ENCODE measurements at regions of chr7 and their contacts with region 1.

Region 1: DNA sequence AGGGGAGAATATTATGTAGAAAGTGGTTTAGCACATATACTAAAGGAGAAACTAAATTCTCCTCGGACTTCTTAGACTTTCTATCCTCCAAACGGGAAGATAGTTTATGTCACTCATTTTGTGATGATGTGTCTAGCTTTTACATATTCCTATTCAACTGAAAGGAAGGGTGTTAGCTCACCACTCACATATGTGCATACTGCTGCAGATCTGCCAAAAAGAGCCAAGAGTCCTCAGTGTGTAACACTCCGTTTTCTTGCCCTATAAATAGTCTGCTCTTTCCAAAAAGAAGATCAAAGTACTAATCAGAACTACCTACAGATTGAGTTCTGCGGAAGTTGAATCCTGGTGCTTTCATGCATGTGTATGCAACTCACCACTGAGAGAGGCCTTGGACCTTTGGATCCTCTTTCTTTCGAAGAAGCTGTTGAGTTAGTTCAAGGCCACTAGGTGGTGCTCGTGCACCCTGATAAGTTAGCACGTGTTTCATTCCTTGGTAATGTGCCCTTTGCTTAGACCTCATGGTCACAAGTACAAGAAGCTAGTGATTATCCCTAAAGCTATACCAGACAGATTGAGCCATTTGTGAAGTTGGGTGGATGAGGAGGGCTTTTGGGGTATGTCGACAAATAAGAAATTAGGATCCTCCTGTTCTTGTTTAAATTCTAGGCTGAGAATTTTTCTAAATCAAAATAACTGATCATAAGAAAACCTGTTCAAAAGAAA is 14.1 kb downstream of the YAE1 start:
- DNase-seq: peak; percentile 94
- H3K4me3 ChIP-seq: no peak overlapping the region
- H3K27ac ChIP-seq: peak overlapping the region; percentile 1
- H3K4me1 ChIP-seq: no peaks in the 10 kb centered on the region
- H3K27me3 ChIP-seq: no peaks in the 10 kb centered on the region
- CTCF ChIP-seq: peak; percentile 74
- POLR2A ChIP-seq: no peak

Region 2: DNA sequence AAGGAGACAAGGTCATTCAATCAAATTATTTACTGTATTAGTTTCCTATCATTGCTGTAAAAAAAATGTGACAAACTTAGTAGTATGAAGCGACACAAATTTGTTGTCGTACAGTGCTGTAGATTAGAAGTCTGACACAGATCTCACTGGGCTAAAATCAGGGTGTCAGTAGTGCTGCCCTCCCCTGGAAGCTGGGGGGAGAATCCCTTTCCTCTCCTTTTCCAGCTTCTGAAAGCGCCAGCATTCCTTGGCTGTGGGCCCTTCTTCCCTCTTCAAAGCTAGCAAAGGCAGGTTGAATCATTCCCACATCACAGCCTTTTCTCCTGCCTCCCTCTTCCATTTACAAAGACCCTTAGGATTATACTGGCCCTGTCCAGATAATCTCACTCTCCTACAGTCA is 699.3 kb before region 1 on chr7:
- CTCF ChIA-PET with region 1: no interaction called
- POLR2A ChIA-PET with region 1: no interaction called
- dilution Hi-C with region 1: no loop called
- intact Hi-C with region 1: no loop called
- DNase-seq: no peak
- H3K4me3 ChIP-seq: no peak overlapping the region
- H3K27ac ChIP-seq: no peak overlapping the region
- H3K4me1 ChIP-seq: peaks cover 7% of the 10 kb centered on the region
- H3K27me3 ChIP-seq: no peaks in the 10 kb centered on the region
- CTCF ChIP-seq: no peak
- POLR2A ChIP-seq: no peak

Region 3: DNA sequence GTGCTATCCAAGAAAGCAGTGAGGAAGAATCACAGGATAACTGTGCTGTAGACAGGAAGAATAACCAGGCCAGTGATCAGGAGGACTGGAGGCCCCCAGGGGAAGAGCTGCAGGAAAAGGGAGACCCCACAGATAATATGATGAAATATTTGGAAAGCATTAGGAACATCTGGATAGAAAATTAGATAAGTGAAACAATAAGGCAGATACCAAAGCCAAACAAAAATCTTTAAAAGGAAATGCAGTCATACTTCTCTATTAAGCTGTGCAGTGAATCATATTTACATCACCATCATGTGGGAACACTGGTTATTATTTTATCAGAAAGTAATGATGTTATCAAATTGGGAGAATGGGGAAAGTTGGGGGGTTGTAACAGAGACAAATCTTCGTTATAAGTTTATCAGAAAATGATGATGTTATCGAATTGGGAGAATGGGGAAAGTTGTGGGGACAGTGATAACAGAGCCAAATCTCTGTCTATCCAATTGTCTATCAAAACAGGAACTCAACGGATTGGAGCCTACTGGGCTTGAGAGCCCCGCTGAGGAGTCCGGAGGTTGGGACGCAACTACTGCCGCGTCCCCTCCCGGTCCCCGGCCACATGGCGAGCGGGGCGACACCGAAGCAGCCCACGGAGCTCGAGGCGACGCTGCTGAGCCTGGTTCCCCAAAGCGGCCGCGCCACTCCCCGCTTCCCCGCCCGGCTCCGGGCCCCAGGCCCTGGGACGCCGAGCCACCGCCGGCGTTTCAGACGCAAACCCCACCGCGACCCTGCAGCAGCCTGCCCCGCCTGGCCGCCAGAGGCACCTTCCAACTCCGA is 29.0 kb after region 1 on chr7:
- CTCF ChIA-PET with region 1: interaction called, 134 read pairs
- POLR2A ChIA-PET with region 1: interaction called, 10 read pairs
- dilution Hi-C with region 1: no loop called
- intact Hi-C with region 1: loop called (anchors 2 kb)
- DNase-seq: peak; percentile 89
- H3K4me3 ChIP-seq: peak overlapping the region in 2 of 3 experiments; percentile 16 to 25
- H3K27ac ChIP-seq: peak overlapping the region; percentile 99
- H3K4me1 ChIP-seq: peaks cover 75% of the 10 kb centered on the region
- H3K27me3 ChIP-seq: no peaks in the 10 kb centered on the region
- CTCF ChIP-seq: peak; percentile 30 to 42
- POLR2A ChIP-seq: peak; percentile 14

Region 4: GRCh38 chr7:39642896-39643295 is 62.6 kb after region 1 on chr7:
- CTCF ChIA-PET with region 1: interaction called, 23 read pairs
- POLR2A ChIA-PET with region 1: interaction called, 3 read pairs
- dilution Hi-C with region 1: no loop called
- intact Hi-C with region 1: no loop called
- DNase-seq: peak; percentile 71
- H3K4me3 ChIP-seq: no peak overlapping the region
- H3K27ac ChIP-seq: no peak overlapping the region
- H3K4me1 ChIP-seq: peaks cover 33% of the 10 kb centered on the region
- H3K27me3 ChIP-seq: no peaks in the 10 kb centered on the region
- CTCF ChIP-seq: no peak
- POLR2A ChIP-seq: no peak

Region 5: GRCh38 chr7:39667341-39667923 is 87.1 kb after region 1 on chr7:
- CTCF ChIA-PET with region 1: interaction called, 26 read pairs
- POLR2A ChIA-PET with region 1: no interaction called
- dilution Hi-C with region 1: no loop called
- intact Hi-C with region 1: no loop called
- DNase-seq: no peak
- H3K4me3 ChIP-seq: no peak overlapping the region
- H3K27ac ChIP-seq: no peak overlapping the region
- H3K4me1 ChIP-seq: peaks cover 17% of the 10 kb centered on the region
- H3K27me3 ChIP-seq: no peaks in the 10 kb centered on the region
- CTCF ChIP-seq: no peak
- POLR2A ChIP-seq: no peak

Region 6: DNA sequence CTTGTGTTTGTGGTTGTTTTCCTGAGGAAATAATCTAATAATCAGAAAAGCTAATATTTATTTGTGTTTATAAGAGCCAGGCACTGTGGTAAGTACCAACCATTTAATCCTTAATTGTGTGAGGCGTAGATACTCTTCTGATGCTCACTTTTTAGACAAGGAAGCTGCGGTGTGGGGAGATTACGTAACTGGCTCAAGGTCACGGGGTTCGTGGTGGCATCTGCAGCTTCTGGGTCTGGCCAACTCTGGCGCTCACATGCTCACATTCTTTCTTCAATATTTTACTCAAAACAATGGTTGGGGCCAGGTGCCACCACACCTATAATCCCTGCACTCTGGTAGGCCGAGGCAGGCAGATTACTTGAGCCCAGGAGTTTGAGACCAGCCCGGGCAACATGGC is 120.6 kb after region 1 on chr7:
- CTCF ChIA-PET with region 1: interaction called, 29 read pairs
- POLR2A ChIA-PET with region 1: no interaction called
- dilution Hi-C with region 1: no loop called
- intact Hi-C with region 1: no loop called
- DNase-seq: no peak
- H3K4me3 ChIP-seq: no peak overlapping the region
- H3K27ac ChIP-seq: no peak overlapping the region
- H3K4me1 ChIP-seq: peaks cover 2% of the 10 kb centered on the region
- H3K27me3 ChIP-seq: no peaks in the 10 kb centered on the region
- CTCF ChIP-seq: no peak
- POLR2A ChIP-seq: no peak

Region 7: DNA sequence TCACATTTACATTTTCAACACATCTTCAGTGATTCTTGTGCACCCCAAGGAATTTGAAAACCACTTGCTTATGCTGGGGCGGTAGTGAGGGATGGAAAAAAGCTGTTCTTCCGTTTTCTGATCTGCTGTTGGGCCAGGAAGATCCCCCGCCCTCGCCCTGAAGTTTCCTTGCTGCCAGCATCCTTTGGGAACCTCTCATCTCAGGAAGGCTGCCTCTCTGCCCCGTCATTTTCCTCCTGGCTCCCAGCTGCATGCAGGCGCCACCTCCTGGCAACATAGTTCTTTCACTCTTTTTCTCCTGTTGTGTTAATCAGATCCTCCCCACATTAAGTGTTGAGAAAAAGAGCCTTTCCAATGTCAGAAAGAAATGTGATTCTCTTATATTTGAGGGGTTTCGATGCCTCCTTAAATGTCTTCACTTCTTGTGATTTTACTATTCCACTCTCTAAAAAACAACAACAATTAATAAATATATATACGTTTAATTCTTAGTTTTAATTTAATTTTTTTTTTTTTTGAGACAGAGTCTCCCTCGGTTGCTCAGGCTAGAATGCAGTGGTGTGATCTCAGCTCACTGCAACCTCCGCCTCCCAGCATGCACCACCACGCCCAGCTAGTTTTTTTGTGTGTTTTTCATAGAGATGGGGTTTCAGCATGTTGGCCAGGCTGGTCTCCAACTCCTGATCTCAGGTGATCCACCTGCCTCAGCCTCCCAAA is 165.9 kb after region 1 on chr7:
- CTCF ChIA-PET with region 1: interaction called, 306 read pairs
- POLR2A ChIA-PET with region 1: interaction called, 3 read pairs
- dilution Hi-C with region 1: no loop called
- intact Hi-C with region 1: loop called (anchors 1 kb)
- DNase-seq: peak; percentile 82
- H3K4me3 ChIP-seq: no peak overlapping the region
- H3K27ac ChIP-seq: no peak overlapping the region
- H3K4me1 ChIP-seq: peaks cover 6% of the 10 kb centered on the region
- H3K27me3 ChIP-seq: no peaks in the 10 kb centered on the region
- CTCF ChIP-seq: peak; percentile 75 to 77
- POLR2A ChIP-seq: no peak